ENCODE measurements at regions of chr6 and their contacts with region 1.

Region 1: DNA sequence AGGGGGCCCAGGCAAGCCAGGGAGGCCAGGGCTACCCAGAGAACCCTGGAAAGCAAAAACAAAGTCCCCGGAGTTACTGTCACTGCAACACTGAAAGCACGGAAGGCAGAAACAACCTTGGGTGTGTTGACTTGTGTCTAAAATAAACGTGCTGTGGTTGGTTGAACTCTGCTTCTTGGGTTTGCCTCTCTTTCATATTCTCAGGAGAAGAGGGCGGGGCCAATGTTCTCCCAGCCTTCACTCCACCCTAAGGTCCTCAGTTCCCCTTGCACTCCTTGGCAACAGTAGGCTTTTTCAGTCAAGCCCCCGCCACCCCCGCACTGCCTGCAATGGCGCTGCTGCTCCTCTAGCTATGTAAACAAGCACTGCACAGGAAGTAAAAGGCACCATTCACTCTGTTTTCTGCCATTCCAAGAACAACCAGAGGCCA is 60.9 kb downstream of the COL9A1 start:
- DNase-seq: no peak
- H3K4me3 ChIP-seq: no peak overlapping the region
- H3K27ac ChIP-seq: no peak overlapping the region
- H3K4me1 ChIP-seq: peaks cover 0 to 6% (median 4%) of the 10 kb centered on the region in 4 experiments; a peak in 5 of 7 replicates
- H3K27me3 ChIP-seq: no peaks in the 10 kb centered on the region
- CTCF ChIP-seq: no peak
- EP300 ChIP-seq: no peak
- POLR2A ChIP-seq: no peak
- RAD21 ChIP-seq: no peak

Region 2: GRCh38 chr6:70231311-70231710 is 10.7 kb before region 1 on chr6:
- CTCF ChIA-PET with region 1: interaction called, 12 read pairs
- POLR2A ChIA-PET with region 1: interaction called, 4 read pairs
- DNase-seq: no peak
- H3K4me3 ChIP-seq: no peak overlapping the region
- H3K27ac ChIP-seq: no peak overlapping the region
- H3K4me1 ChIP-seq: peaks cover 0 to 3% (median 2%) of the 10 kb centered on the region in 4 experiments; a peak in 2 of 7 replicates
- H3K27me3 ChIP-seq: no peaks in the 10 kb centered on the region
- CTCF ChIP-seq: no peak
- EP300 ChIP-seq: no peak
- POLR2A ChIP-seq: no peak
- RAD21 ChIP-seq: no peak

Measured in H1 (cell line).